Psoas muscle (tissue), 8 donors: ENCODE measurements at regions of chr20 and their contacts with region 1.

Region 1: GRCh38 chr20:19889011-19889953 is 127.9 kb upstream of the NAA20 start:
- DNase-seq: peak; percentile 40 to 75
- ATAC-seq: peak; percentile 58 to 74 (median 68)
- H3K4me3 ChIP-seq: peak overlapping the region; percentile 55
- H3K27ac ChIP-seq: peak overlapping the region; percentile 86
- H3K4me1 ChIP-seq: peaks cover 64% of the 10 kb centered on the region
- H3K27me3 ChIP-seq: no peaks in the 10 kb centered on the region
- CTCF ChIP-seq: no peak

Region 2: DNA sequence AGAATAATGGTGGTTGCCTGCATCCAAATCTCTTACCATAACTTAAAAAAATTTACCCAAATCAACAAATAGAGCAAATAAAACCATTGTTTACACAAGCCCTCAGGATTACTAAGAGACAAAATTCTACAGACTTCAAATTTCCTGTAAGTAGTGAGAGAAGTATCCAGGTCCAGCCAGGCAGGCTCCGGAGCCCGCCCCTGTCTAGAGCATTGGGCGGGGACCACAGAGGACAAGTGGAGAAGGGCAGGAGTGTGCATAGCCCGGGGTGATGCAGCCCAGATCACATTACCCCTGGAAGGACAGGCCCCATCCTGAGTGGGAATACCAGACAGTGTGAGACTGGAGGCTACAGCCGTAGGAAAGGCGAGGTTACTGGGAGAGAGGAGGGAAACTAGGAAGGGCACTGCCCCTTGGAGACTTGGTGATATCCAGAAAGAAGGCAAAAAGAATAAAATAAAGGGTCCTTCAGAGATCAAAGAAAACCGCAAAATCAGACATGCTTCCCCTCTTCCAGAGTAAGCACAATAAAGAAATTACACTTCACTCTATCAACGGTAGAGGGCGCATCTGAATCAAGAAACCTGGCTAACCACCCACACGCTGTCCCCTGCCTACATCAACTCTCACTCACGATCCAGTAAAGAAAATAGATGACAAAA is 104.6 kb before region 1 on chr20:
- intact Hi-C with region 1: loop called in 1 of 2 experiments (anchors 2 kb)
- DNase-seq: peak; percentile 44 to 67
- ATAC-seq: peak; percentile 84 to 91 (median 87)
- H3K4me3 ChIP-seq: peak overlapping the region; percentile 16
- H3K27ac ChIP-seq: peak overlapping the region; percentile 63
- H3K4me1 ChIP-seq: peaks cover 39% of the 10 kb centered on the region
- H3K27me3 ChIP-seq: no peaks in the 10 kb centered on the region
- CTCF ChIP-seq: peak; percentile 81